ENCODE measurements at regions of chr17 and their contacts with region 1.

Region 1: GRCh38 chr17:16363749-16364536 is 10.7 kb upstream of the CENPV start:
- H3K4me3 ChIP-seq: no peak overlapping the region
- H3K27ac ChIP-seq: no peak overlapping the region
- H3K4me1 ChIP-seq: peaks cover 4% of the 10 kb centered on the region
- CTCF ChIP-seq: peak; percentile 80

Region 2: DNA sequence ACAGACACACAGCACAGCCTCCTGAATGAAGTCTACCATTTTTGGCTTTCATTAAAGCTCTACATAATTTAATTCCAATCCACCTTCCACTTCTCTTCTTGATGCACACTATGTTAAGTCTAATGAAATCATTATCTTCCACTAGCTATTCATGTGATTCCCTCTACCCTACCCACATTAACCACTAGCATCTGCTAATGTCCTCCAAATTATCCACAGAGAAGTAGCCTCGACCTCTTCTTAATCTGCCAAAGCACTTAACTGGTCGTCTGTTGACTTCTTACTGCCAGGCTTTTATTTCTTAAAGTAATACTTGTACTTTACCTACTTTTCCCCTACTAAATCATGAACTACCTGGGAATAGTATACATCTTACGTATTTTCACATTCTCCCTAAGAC is 240.4 kb before region 1 on chr17:
- CTCF ChIA-PET with region 1: no interaction called
- POLR2A ChIA-PET with region 1: no interaction called
- H3K4me3 ChIP-seq: no peak overlapping the region
- H3K27ac ChIP-seq: no peak overlapping the region
- H3K4me1 ChIP-seq: no peaks in the 10 kb centered on the region
- CTCF ChIP-seq: no peak

Region 3: DNA sequence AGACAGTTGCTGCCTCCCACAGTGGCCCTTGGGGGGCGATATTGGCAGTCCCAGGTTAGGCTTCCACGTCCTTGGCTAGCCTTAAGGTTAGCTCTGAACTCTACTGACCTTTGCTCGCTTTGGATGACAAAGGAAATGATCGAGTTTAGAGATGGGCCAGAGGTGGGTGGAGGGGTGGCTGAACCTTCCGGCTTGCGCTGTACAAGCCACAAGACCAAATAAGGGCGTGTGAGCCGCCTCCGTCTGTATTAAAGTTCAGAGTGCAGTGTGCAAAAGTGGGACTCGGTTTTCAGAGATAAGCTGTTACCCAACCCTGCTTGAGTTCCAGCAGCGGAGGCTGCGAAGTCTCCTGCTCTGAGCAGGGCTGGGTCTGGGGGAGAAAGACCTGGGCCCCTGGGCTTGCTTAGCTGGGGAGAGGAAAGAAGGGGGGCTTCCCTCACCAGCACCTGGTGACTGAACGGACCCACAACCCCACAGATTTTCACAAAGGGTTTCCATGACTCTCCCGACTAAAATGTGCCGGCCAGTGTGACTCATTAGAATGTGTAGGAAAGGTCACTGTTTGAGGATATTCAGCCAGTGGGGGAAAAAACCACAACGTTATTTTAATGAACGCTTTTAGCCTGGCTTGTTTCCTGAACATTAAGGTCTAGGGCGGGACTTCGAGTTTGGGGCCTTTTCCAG is 77.8 kb before region 1 on chr17:
- CTCF ChIA-PET with region 1: interaction called, 15 read pairs
- POLR2A ChIA-PET with region 1: no interaction called
- H3K4me3 ChIP-seq: peak overlapping the region; percentile 3
- H3K27ac ChIP-seq: peak overlapping the region; percentile 72
- H3K4me1 ChIP-seq: peaks cover 14% of the 10 kb centered on the region
- CTCF ChIP-seq: peak; percentile 61

Region 4: GRCh38 chr17:16325964-16326363 is 38.0 kb before region 1 on chr17:
- CTCF ChIA-PET with region 1: interaction called, 10 read pairs
- POLR2A ChIA-PET with region 1: no interaction called
- H3K4me3 ChIP-seq: no peak overlapping the region
- H3K27ac ChIP-seq: no peak overlapping the region
- H3K4me1 ChIP-seq: peaks cover 11% of the 10 kb centered on the region
- CTCF ChIP-seq: no peak

Region 5: GRCh38 chr17:16353317-16354174 is 10.4 kb before region 1 on chr17 and contains the start of gene CENPV:
- CTCF ChIA-PET with region 1: interaction called, 89 read pairs
- POLR2A ChIA-PET with region 1: interaction called, 19 read pairs
- H3K4me3 ChIP-seq: peak within 1 kb of the TSS; percentile 77
- H3K27ac ChIP-seq: peak within 1 kb of the TSS; percentile 97
- H3K4me1 ChIP-seq: peaks cover 3% of the 10 kb centered on the region; the same call in 1 of the 2 replicates
- CTCF ChIP-seq: peak; percentile 19; the same call in 1 of the 2 replicates

Region 6: DNA sequence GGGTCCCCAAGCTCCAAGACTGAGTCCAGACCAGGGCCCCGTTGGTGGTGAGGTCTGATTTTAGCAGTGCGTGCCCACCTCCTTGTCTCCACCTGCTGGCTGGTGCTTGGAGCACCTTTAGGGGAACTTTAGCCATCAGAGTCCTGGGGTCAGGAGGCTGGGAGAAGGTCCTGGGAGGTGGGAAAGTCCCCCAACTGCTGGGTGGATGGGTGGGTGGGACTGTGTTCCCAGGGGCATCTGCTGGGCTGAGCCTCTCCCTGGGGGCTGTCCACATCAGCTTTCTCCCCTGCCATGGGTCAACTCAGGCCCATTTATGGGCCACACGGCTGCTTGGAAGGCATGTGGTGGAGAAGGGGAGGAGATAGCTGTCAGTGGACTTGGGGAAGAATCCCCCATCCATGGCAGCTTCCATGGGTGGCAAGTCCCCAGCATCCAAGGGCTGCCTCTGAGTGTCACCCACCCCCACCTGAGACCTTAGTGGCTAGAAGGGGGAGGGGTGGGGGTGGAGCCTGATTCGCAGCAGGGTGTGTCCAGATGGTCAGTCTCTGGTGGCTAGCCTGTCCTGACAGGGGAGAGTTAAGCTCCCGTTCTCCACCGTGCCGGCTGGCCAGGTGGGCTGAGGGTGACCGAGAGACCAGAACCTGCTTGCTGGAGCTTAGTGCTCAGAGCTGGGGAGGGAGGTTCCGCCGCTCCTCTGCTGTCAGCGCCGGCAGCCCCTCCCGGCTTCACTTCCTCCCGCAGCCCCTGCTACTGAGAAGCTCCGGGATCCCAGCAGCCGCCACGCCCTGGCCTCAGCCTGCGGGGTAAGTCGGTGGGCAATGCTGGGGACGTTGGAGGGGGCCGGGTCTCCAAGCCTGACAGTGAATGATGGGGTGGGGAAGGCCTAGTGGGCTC is 51.3 kb after region 1 on chr17 and contains the start of gene TRPV2:
- CTCF ChIA-PET with region 1: interaction called, 13 read pairs
- POLR2A ChIA-PET with region 1: no interaction called
- H3K4me3 ChIP-seq: no peak within 1 kb of the TSS
- H3K27ac ChIP-seq: no peak within 1 kb of the TSS
- H3K4me1 ChIP-seq: peaks cover 11% of the 10 kb centered on the region; the same call in 1 of the 2 replicates
- CTCF ChIP-seq: no peak; the same call in 1 of the 2 replicates

Region 7: GRCh38 chr17:16444258-16444886 is 80.4 kb after region 1 on chr17:
- CTCF ChIA-PET with region 1: interaction called, 10 read pairs
- POLR2A ChIA-PET with region 1: interaction called, 24 read pairs
- H3K4me3 ChIP-seq: no peak overlapping the region
- H3K27ac ChIP-seq: no peak overlapping the region; the same call in 1 of the 2 replicates
- H3K4me1 ChIP-seq: no peaks in the 10 kb centered on the region
- CTCF ChIP-seq: no peak